A549 (cell line): ENCODE measurements at regions of chr16 and their contacts with region 1.

Region 1: DNA sequence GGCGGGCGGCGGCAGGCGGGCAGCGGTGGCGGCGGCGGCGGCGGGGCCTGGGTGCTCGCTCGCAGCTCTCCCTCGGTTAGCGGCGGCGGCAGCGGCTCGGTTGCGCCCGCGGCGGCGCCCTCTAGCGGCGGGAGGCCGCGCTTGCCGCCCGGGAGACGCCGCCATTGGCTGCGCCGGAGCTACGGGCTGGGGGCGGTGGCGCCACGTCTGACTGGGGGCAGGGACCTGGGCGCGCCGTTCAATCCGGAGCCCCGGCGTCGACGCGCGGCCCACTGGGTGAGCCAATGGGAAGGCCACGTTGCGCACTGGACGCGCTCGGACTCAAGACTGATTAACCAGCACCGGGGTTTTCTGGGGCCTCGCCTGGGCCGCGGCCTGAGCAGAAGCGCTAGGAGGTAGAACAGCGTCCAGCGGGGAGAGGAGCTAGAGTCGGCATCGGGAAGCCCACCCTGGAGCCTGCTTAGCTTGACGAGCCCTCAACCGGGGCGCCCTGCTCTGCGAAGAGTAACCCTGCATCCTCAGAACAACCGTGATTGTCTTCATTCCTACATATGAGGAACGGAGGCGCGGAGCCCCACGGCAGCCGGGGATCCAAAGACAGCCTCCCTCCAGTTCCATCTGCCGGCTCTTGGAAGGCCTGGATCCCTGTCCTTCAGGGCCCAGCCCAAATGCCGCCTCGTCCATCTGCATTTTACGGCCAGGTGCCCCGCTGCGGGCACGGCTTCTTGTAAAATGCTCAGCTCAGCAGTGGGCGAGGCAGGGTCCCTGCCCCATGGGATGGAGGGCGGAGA is at the start of gene ZC3H7A:
- DNase-seq: peak; percentile 96 to 99
- ATAC-seq: peak; percentile 98 to 99
- H3K4me3 ChIP-seq: peak within 1 kb of the TSS; percentile 89
- H3K27ac ChIP-seq: peak within 1 kb of the TSS; percentile 97
- H3K4me1 ChIP-seq: peaks cover 44% of the 10 kb centered on the region
- CTCF ChIP-seq: peak; percentile 86
- EP300 ChIP-seq: no peak
- POLR2A ChIP-seq: peak; percentile 98
- RAD21 ChIP-seq: peak in 1 of 2 experiments; percentile 6; a peak in 1 of 5 replicates
- polyA plus RNA-seq, gene ZC3H7A: 41.5 and 55.1 TPM in 2 replicates

Region 2: DNA sequence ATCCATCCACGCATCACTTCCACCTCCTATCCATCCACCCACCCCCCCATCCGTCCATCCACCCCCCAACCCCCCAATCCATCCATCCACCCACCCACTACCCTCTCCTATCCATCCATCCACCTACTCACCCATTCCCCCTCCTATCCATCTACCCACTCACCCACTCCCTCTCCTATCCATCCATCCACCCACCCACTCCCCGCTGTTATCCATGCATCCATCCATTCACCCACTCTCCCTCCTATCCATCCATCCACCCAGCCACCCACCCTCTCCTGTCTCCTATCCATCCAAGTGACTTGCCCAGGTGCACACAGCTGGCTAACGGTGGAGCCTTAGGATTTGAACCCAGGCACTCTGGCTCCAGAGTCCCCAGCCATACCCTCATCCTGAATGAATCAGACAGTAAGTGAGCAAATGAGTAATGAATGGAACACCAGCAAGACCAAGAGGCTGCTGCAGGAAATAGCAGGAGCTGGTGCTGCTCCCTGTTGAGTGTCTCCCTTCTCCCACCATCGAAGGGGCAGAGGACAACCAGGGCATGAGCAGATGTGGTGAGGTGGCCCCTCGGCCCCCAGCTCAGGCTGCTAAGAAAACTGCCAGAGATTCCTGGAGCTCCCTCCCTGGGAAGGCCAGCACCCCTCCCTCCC is 273.1 kb before region 1 on chr16:
- CTCF ChIA-PET with region 1: no interaction called
- POLR2A ChIA-PET with region 1: no interaction called
- DNase-seq: no peak
- ATAC-seq: peak; percentile 45 to 64; a peak in 3 of 6 replicates
- H3K4me3 ChIP-seq: no peak overlapping the region
- H3K27ac ChIP-seq: peak overlapping the region in 1 of 2 experiments; percentile 50; a peak in 3 of 6 replicates
- H3K4me1 ChIP-seq: peaks cover under 1% of the 10 kb centered on the region; the same call in 1 of the 3 replicates
- CTCF ChIP-seq: no peak
- EP300 ChIP-seq: no peak
- POLR2A ChIP-seq: no peak; the same call in 1 of the 2 replicates
- RAD21 ChIP-seq: peak; percentile 20 to 30; a peak in 4 of 5 replicates

Region 3: GRCh38 chr16:11742539-11743307 is 54.6 kb before region 1 on chr16 and contains the start of gene TXNDC11:
- CTCF ChIA-PET with region 1: interaction called, 25 read pairs
- POLR2A ChIA-PET with region 1: interaction called, 29 read pairs
- DNase-seq: peak; percentile 85 to 99
- ATAC-seq: peak; percentile 94 to 95
- H3K4me3 ChIP-seq: peak within 1 kb of the TSS; percentile 87
- H3K27ac ChIP-seq: peak within 1 kb of the TSS; percentile 91 to 97
- H3K4me1 ChIP-seq: peaks cover 33% of the 10 kb centered on the region
- CTCF ChIP-seq: no peak
- EP300 ChIP-seq: no peak
- POLR2A ChIP-seq: peak; percentile 96
- RAD21 ChIP-seq: no peak
- polyA plus RNA-seq, gene TXNDC11: 42.4 and 45.1 TPM in 2 replicates

Region 4: GRCh38 chr16:11768849-11769248 is 28.5 kb before region 1 on chr16:
- CTCF ChIA-PET with region 1: interaction called, 12 read pairs
- POLR2A ChIA-PET with region 1: no interaction called
- DNase-seq: no peak
- ATAC-seq: no peak
- H3K4me3 ChIP-seq: no peak overlapping the region
- H3K27ac ChIP-seq: no peak overlapping the region
- H3K4me1 ChIP-seq: no peaks in the 10 kb centered on the region
- CTCF ChIP-seq: no peak
- EP300 ChIP-seq: no peak
- POLR2A ChIP-seq: no peak
- RAD21 ChIP-seq: no peak

Region 5: DNA sequence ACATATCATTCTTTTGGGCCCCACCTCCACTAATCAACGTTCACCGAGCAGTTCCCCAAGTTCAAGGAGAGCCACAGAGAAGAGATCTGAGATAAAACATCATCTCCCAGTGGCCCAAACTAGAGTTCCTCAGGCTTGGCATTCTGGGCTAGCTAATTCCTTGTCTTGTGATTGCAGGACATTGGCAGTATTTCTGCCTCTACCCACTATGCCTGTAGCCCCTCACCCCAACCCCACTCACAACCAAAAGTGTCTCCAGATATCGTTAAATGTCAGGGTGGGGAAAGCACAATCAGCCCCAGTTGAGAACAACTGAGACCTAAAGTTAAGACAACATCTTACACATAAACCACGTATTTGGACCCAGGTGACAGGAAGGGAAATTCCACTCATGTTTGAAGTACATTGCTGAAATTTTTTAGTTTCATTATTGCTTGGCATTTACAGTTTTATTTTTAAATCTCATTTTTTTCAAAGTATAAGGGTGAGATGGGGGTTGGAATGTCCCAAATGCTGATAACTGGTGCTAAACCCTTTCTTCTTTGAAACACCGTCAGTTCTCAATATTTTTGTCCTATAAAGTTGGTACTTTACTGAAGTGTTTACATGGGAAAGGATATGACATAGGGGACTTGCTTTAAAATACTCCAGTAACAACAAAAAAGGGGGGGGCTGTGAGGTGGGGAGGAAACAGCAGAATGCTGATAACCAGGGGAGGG is 13.9 kb before region 1 on chr16:
- CTCF ChIA-PET with region 1: interaction called, 31 read pairs
- POLR2A ChIA-PET with region 1: interaction called, 3 read pairs
- DNase-seq: no peak
- ATAC-seq: peak in 1 of 2 experiments; percentile 40; a peak in 3 of 6 replicates
- H3K4me3 ChIP-seq: no peak overlapping the region
- H3K27ac ChIP-seq: peak overlapping the region; percentile 27 to 54; a peak in 3 of 6 replicates
- H3K4me1 ChIP-seq: peaks cover 19% of the 10 kb centered on the region
- CTCF ChIP-seq: no peak
- EP300 ChIP-seq: no peak
- POLR2A ChIP-seq: no peak
- RAD21 ChIP-seq: no peak

Region 6: GRCh38 chr16:11819798-11820197 is 22.4 kb after region 1 on chr16:
- CTCF ChIA-PET with region 1: interaction called, 58 read pairs
- POLR2A ChIA-PET with region 1: no interaction called
- DNase-seq: no peak
- ATAC-seq: 0 out of 6 replicates have a peak, but pooled peaks of 1 of the 2 experiments have one; percentile 19
- H3K4me3 ChIP-seq: no peak overlapping the region
- H3K27ac ChIP-seq: no peak overlapping the region
- H3K4me1 ChIP-seq: 0 out of 3 replicates have a peak, but pooled peaks cover 4% of the 10 kb centered on the region
- CTCF ChIP-seq: no peak
- EP300 ChIP-seq: no peak
- POLR2A ChIP-seq: no peak
- RAD21 ChIP-seq: no peak